ENCODE measurements at regions of chr12 and their contacts with region 1.

Region 1: DNA sequence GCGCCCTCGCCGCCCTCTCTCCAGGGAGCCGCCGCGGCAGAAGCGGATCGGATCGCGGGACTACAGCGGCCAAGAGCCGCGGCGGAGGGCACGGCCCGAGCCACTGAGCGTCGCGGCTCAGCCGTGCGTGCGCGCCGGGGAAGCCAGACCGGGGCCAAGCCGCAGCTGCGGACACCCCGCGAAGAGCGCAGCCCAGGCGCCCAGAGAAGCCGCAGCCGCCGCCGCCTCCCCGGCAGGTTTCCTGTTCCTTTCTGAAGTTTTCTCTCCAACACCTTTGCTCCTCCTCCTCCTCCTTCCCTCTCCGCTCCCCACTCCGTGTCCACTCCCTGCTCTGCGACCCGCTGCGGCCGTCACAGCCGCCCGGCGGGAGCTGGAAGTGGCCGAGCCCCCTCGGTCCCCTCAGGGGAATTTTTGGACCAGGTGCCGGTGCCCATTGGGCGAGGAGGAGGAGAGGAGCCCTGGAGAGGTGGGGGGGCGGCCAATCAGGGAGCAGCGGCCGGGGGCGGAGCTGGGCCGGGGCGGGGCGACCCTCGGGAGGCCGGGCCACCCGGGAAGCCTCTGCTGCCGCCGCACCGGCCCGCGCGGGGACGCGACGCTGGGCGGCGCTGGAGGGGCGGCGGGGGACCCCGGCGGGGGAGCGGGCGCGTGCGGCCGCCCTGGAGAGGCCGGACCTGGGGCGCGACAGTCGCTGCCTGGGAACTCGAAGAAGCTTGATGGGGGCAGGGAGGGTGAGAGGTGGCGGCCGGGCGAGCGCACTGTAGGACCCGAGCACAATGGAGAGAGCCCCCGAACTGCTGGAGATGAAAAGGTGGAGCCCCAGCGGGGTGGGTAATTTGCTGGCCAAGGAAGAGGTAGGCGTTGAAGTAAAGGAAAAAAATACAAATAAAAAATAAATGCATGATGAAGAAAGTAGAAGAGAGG is at the start of gene ITPR2:
- DNase-seq: peak; percentile 89
- H3K4me3 ChIP-seq: peak within 1 kb of the TSS; percentile 72 to 91 (median 78)
- H3K27ac ChIP-seq: peak within 1 kb of the TSS; percentile 96
- H3K4me1 ChIP-seq: peaks cover 23% of the 10 kb centered on the region
- H3K27me3 ChIP-seq: no peaks in the 10 kb centered on the region
- CTCF ChIP-seq: peak in 1 of 2 donors; percentile 12
- POLR2A ChIP-seq: peak; percentile 91
- total RNA-seq, gene ITPR2: 86.8 and 88.5 TPM in 2 replicates

Region 2: DNA sequence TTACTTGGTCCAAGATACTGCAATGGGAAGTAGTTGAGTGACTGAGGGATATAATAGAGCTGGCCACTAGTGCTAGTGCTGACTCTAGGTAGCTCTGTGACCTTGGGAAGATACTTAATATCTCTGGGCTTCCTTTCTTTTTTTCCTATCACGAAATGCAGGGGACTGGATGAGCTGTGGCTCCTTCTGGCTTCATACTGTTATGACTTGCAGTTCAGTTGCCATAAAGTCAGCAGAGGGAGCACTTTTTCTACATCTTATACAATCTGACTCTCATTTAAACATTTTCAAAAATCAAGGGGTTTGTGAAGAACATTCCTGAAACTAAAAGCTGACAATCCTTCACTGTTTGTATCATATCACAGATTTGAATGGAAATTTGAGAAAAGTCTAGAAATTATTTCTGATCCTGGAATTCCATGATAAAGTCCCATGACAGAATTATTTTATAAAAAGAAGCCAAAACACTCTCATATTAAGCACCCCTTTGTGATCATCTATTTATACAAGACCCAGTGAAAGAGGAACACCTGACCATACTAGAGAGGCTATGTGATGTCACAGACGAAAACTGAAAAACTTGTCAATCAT is 713.6 kb before region 1 on chr12:
- CTCF ChIA-PET with region 1: no interaction called
- POLR2A ChIA-PET with region 1: no interaction called
- dilution Hi-C with region 1: no loop called
- intact Hi-C with region 1: loop called (anchors 5 kb)
- DNase-seq: peak; percentile 67
- H3K4me3 ChIP-seq: no peak overlapping the region
- H3K27ac ChIP-seq: no peak overlapping the region
- H3K4me1 ChIP-seq: peaks cover 20% of the 10 kb centered on the region
- H3K27me3 ChIP-seq: peaks cover 11 to 18% of the 10 kb centered on the region in 2 experiments
- CTCF ChIP-seq: peak; percentile 44 to 49
- POLR2A ChIP-seq: no peak

Region 3: DNA sequence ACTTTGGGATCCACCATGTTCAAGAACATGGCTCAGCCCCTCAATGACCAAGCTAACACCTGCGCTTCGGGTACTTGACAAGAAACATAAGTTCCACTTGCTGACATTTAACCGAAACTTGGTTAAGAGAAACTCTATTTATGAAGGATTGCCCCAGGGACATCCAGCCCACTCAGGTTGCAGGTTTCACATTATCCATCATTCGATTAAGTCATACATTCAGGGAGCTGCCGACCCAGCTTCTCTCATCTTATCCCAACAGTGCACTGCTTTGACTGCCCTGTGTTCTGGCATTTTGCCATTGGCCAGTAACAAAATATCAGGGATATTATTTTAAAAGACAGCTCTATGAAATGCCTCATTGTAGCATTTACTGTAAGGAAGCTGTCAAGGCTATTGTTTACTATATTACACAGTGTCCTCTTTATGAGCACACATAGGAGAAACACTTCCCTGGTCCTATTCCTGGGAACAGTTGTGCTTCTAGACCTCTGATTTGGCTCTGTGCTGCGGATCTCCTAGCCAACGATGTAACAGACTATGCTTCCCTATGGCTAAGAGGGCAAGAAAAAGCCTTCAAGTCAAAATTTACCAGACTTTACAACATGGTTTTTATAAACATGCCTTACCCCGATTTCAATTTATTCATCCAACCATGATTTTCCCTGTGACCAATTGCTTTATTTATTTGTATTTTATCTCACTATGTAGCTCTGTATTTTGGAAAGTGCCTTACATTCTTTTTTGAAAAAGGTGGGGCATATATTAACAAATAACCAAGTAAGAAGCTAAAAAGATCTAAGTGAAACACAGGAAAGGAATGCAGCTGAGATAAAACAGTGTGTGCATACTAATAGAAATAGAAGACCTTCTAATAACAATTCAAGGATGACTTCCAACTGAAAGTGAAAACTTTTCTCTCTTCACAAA is 109.4 kb before region 1 on chr12:
- CTCF ChIA-PET with region 1: interaction called, 13 read pairs
- POLR2A ChIA-PET with region 1: interaction called, 4 read pairs
- dilution Hi-C with region 1: no loop called
- intact Hi-C with region 1: loop called (anchors 2 kb)
- DNase-seq: peak; percentile 63
- H3K4me3 ChIP-seq: peak overlapping the region in 1 of 3 experiments; percentile 2
- H3K27ac ChIP-seq: peak overlapping the region; percentile 68
- H3K4me1 ChIP-seq: peaks cover 49% of the 10 kb centered on the region
- H3K27me3 ChIP-seq: no peaks in the 10 kb centered on the region
- CTCF ChIP-seq: no peak
- POLR2A ChIP-seq: no peak

Region 4: GRCh38 chr12:26748741-26749431 is 84.2 kb before region 1 on chr12:
- CTCF ChIA-PET with region 1: interaction called, 15 read pairs
- POLR2A ChIA-PET with region 1: interaction called, 4 read pairs
- dilution Hi-C with region 1: no loop called
- intact Hi-C with region 1: loop called (anchors 2 kb)
- DNase-seq: peak; percentile 81
- H3K4me3 ChIP-seq: peak overlapping the region in 1 of 3 experiments; percentile 42
- H3K27ac ChIP-seq: peak overlapping the region; percentile 77
- H3K4me1 ChIP-seq: peaks cover 57% of the 10 kb centered on the region
- H3K27me3 ChIP-seq: no peaks in the 10 kb centered on the region
- CTCF ChIP-seq: no peak
- POLR2A ChIP-seq: no peak

Region 5: GRCh38 chr12:26821212-26821701 is 11.8 kb before region 1 on chr12:
- CTCF ChIA-PET with region 1: interaction called, 29 read pairs
- POLR2A ChIA-PET with region 1: interaction called, 11 read pairs
- dilution Hi-C with region 1: no loop called
- intact Hi-C with region 1: no loop called
- DNase-seq: peak; percentile 69
- H3K4me3 ChIP-seq: peak overlapping the region in 2 of 3 experiments; percentile 19 to 47
- H3K27ac ChIP-seq: peak overlapping the region; percentile 75
- H3K4me1 ChIP-seq: peaks cover 28% of the 10 kb centered on the region
- H3K27me3 ChIP-seq: no peaks in the 10 kb centered on the region
- CTCF ChIP-seq: no peak
- POLR2A ChIP-seq: no peak

Region 6: DNA sequence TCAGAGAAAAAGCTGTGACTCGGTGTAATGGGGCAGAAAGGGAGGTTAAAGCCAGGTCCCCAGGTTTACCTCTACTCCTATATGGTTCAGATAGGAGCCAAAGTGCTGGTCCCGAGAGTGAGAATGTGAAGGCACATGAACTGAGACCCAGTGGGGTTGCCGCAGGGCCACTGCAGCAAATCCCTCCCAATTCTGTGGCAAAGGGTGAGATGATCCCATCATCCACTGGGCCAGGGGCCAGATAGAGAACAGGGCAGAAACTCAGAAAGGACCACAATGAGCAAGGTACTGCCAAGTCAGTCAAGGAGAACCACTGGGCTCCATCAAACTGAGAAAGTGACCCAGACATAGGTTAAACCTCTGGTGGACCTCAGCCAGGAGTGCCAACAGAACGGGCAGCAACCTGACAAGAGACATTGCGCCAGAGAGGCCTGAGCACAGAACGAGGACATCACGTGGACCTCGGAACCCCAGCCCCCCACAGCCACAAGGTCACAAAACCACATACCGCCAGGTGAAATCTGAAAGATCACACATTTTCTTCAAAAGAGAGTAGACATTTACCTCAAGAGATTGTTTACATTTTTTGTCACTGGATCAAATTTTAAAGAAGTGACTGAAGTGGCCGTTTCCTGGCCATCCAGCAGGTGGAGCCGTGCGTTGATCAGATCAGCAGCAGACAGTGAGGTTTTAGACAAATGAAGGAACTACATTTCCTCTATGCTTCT is 20.4 kb after region 1 on chr12:
- CTCF ChIA-PET with region 1: interaction called, 10 read pairs
- POLR2A ChIA-PET with region 1: no interaction called
- dilution Hi-C with region 1: no loop called
- intact Hi-C with region 1: loop called (anchors 1 kb)
- DNase-seq: peak; percentile 74
- H3K4me3 ChIP-seq: no peak overlapping the region
- H3K27ac ChIP-seq: no peak overlapping the region
- H3K4me1 ChIP-seq: peaks cover 32% of the 10 kb centered on the region
- H3K27me3 ChIP-seq: no peaks in the 10 kb centered on the region
- CTCF ChIP-seq: peak; percentile 77 to 94
- POLR2A ChIP-seq: no peak

Region 7: DNA sequence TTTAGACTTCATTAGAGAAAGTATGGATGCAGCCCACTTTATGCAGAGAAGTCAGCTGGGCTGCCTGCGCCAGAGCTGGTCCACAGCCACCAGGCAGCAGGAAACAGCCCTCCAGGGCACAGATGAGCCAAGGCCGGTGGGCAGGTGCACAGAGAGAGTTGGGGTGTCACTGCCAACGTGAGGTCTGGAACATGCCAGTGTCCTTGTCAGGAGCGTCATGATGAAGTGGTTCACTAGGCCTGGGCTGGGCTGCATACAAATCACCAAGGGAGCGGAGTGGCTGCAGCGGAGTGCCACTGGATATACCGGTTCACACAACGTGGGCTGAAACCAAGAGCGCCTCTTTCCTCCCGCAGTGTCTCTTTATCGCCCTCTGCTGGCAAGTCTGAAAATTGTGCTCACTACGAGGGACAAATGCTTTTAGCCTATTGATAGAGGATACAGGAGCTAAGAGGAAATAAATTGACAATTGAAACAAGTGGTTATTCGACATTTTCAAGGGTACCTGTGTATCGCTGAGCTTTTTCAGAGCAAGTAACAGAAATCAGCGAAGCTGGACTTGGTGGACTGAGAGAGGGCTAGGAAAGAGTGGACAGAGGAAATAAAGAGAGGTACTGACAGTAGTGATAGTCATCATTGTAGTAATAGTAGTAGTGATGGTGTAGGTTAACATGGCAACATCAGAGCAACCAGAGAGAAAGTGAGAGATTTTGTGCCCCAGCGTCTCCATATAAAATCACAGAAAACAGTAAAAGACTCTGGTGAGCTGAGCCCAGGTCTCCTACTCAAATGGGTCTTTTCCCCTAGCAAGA is 51.9 kb after region 1 on chr12:
- CTCF ChIA-PET with region 1: interaction called, 28 read pairs
- POLR2A ChIA-PET with region 1: interaction called, 5 read pairs
- dilution Hi-C with region 1: no loop called
- intact Hi-C with region 1: loop called (anchors 1 kb)
- DNase-seq: peak; percentile 83
- H3K4me3 ChIP-seq: no peak overlapping the region
- H3K27ac ChIP-seq: no peak overlapping the region
- H3K4me1 ChIP-seq: peaks cover 2% of the 10 kb centered on the region
- H3K27me3 ChIP-seq: no peaks in the 10 kb centered on the region
- CTCF ChIP-seq: peak; percentile 88 to 90
- POLR2A ChIP-seq: no peak